ENCODE measurements at regions of chr10 and their contacts with region 1.

Region 1: GRCh38 chr10:22316285-22317120 is at the start of gene COMMD3:
- DNase-seq: peak; percentile 70 to 85 (median 77)
- H3K4me3 ChIP-seq: peak within 1 kb of the TSS; percentile 85
- H3K4me3 Mint-ChIP-seq: peak within 1 kb of the TSS; percentile 90 to 96 (median 94)
- H3K27ac ChIP-seq: peak within 1 kb of the TSS; percentile 82
- H3K27ac Mint-ChIP-seq: peak within 1 kb of the TSS; percentile 87 to 98 (median 96)
- H3K4me1 ChIP-seq: peaks cover 35% of the 10 kb centered on the region
- H3K4me1 Mint-ChIP-seq: peaks cover 25 to 47% (median 47%) of the 10 kb centered on the region in 3 donors
- H3K27me3 ChIP-seq: peaks cover 6% of the 10 kb centered on the region
- H3K27me3 Mint-ChIP-seq: peaks cover 4 to 21% of the 10 kb centered on the region in 2 donors
- total RNA-seq, gene COMMD3: 80.2 to 80.4 TPM

Region 2: GRCh38 chr10:22228943-22229801 is 87.3 kb before region 1 on chr10:
- CTCF ChIA-PET with region 1: interaction called, 8 read pairs
- POLR2A ChIA-PET with region 1: interaction called, 19 read pairs
- DNase-seq: peak; percentile 73 to 91 (median 88)
- H3K4me3 ChIP-seq: peak overlapping the region; percentile 71
- H3K4me3 Mint-ChIP-seq: peak overlapping the region; percentile 81 to 98 (median 88)
- H3K27ac ChIP-seq: peak overlapping the region; percentile 76
- H3K27ac Mint-ChIP-seq: peak overlapping the region; percentile 92 to 99 (median 96)
- H3K4me1 ChIP-seq: peaks cover 8% of the 10 kb centered on the region
- H3K4me1 Mint-ChIP-seq: peaks cover 18 to 31% (median 28%) of the 10 kb centered on the region in 3 donors
- H3K27me3 ChIP-seq: no peaks in the 10 kb centered on the region
- H3K27me3 Mint-ChIP-seq: peaks cover 15 to 17% of the 10 kb centered on the region in 2 donors

Region 3: GRCh38 chr10:22340362-22341189 is 24.1 kb after region 1 on chr10:
- CTCF ChIA-PET with region 1: interaction called, 5 read pairs
- POLR2A ChIA-PET with region 1: interaction called, 24 read pairs
- DNase-seq: peak; percentile 38 to 79 (median 65)
- H3K4me3 ChIP-seq: peak overlapping the region; percentile 46
- H3K4me3 Mint-ChIP-seq: peak overlapping the region; percentile 85 to 98 (median 89)
- H3K27ac ChIP-seq: peak overlapping the region; percentile 66
- H3K27ac Mint-ChIP-seq: peak overlapping the region in 7 of 8 donors; percentile 79 to 95 (median 88)
- H3K4me1 ChIP-seq: peaks cover 33% of the 10 kb centered on the region
- H3K4me1 Mint-ChIP-seq: peaks cover 15 to 33% (median 30%) of the 10 kb centered on the region in 3 donors
- H3K27me3 ChIP-seq: peaks cover 94% of the 10 kb centered on the region
- H3K27me3 Mint-ChIP-seq: peaks cover 77 to 80% of the 10 kb centered on the region in 2 donors

Measured in CD8-positive, alpha-beta memory T cell (primary cell).